ENCODE measurements at regions of chr12 and their contacts with region 1.

Region 1: GRCh38 chr12:65871865-65872655 is 47.8 kb downstream of the HMGA2 start:
- DNase-seq: no peak
- H3K4me3 ChIP-seq: no peak overlapping the region
- H3K27ac ChIP-seq: no peak overlapping the region
- H3K4me1 ChIP-seq: peaks cover 1% of the 10 kb centered on the region
- H3K27me3 ChIP-seq: no peaks in the 10 kb centered on the region
- CTCF ChIP-seq: no peak
- EP300 ChIP-seq: no peak
- POLR2A ChIP-seq: no peak

Region 2: DNA sequence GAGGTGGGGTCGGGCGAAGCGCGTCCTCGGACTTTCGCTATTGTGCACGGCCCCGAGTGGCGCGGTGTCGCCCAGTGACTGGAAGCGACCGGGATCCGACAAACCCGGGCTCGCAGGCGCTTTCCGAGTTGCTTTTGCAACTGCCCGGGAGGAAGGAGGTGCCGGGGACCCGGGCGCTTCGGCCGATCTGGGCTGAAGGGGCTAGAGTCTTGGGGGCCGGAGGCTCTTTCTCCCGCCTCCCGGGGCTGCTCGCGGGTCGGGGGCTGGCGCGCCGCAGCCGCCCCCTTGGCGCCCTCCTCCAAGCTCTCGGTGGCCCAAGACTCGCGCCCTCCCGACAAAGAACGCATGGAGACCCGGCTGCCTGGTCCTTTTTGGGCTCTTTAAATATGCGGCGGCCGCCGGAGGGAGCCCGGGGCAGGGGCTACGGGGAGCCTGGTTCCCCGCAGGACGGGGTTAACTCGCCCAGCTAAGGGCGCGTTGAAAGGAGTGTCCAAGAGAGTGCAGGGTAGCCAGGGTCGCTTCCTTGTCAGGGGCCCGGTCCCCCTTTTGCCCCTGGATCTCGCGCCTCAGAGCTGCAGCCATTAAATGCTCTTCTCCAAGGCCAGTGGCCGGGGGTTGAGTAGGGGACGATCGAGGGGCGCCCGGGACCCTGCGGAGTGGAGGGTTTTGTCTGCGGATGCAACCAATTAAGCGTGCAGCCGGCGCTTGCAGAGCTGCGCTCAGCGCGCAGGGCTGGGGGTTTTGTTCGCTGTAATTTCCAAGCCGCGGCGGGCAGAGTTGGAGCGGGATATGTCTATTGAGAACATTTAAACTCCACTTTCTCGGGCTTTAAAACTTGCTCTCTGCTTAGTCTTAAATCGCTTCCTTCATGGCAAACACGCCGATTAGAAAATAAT is 46.2 kb before region 1 on chr12:
- intact Hi-C with region 1: loop called in 1 of 4 experiments (anchors 5 kb)
- DNase-seq: peak; percentile 10 to 42 (median 38)
- H3K4me3 ChIP-seq: peak overlapping the region; percentile 54
- H3K27ac ChIP-seq: no peak overlapping the region
- H3K4me1 ChIP-seq: peaks cover 3% of the 10 kb centered on the region
- H3K27me3 ChIP-seq: no peaks in the 10 kb centered on the region
- CTCF ChIP-seq: no peak
- EP300 ChIP-seq: no peak
- POLR2A ChIP-seq: no peak